Head of caudate nucleus (tissue), 42 donors: ENCODE measurements at regions of chr7 and their contacts with region 1.

Region 1: DNA sequence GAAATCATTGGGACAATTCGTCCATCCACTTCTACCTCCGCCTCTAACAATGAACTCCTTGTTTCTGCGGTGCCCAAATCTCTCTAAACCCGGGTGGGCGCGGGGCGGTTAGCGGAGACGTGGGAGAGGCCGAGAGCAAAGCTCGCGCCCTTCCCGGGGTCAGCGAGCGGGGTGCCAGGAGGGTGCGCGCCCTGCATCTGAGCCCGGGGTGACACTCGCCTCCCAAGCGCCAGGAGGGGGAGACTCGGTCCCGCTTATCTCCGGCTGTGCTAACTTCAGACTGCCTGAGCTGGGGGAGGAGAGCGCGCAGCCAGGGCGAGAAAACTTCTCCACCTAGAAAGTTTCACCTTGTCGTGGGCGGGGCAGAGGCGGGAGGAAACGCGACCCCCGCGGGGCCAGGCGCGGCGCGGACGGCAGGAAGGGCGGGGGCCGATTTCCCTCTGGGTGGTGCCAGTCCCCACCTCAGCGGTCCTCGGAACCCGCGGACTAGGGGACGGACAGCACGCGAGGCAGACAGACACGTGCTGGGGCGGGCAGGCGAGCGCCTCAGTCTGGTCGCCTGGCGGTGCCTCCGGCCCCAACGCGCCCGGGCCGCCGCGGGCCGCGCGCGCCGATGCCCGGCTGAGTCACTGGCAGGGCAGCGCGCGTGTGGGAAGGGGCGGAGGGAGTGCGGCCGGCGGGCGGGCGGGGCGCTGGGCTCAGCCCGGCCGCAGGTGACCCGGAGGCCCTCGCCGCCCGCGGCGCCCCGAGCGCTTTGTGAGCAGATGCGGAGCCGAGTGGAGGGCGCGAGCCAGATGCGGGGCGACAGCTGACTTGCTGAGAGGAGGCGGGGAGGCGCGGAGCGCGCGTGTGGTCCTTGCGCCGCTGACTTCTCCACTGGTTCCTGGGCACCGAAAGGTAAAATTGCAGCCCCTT is at the start of gene MET:
- DNase-seq: peak; percentile 54 to 91 (median 74)

Region 2: DNA sequence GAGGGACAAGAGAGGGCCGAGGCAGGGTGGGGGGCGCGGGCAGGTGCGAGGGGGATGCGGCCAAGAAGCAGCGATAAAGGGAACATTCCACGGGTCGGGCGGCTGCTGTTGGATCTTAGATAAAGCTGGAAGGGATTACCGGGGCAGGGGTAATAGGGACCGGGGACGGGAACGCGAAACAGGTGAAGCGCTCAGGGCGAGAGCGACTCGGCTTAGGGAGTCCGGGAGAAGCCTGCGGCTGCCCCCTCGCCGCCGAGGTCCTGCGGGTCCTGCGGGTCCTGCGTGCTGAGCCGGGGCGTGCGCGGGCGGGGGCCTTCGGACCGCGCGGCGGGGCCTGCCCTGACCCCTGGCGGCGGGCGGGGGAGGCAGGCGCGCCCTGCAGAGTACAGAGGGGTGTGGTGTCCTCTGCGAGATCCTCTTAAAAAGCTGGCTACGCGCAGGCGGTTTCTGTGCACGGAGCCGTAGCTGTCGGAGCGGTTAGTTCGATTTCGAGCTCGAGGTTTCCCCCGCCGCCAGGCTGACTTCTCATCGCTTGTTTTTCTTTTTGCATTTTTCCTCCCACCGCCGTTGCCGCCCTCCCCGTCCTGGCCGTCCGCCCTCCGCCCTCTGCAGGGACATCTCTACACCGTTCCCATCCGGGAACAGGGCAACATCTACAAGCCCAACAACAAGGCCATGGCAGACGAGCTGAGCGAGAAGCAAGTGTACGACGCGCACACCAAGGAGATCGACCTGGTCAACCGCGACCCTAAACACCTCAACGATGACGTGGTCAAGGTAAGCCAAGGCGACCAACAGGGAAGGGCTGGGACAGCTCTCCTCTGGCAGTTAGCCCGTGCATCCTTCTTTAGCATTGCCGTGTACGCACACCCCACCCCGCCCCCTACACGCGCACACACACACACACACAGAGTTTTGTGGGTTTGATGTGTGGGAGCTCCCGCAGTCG is 145.8 kb before region 1 on chr7:
- intact Hi-C with region 1: no loop called
- DNase-seq: peak in 41 of 42 donors; percentile 42 to 87 (median 71)

Region 3: GRCh38 chr7:116598278-116598677 is 73.7 kb before region 1 on chr7:
- intact Hi-C with region 1: loop called (anchors 5 kb)
- DNase-seq: peak in 30 of 42 donors; percentile 7 to 83 (median 46)

Region 4: DNA sequence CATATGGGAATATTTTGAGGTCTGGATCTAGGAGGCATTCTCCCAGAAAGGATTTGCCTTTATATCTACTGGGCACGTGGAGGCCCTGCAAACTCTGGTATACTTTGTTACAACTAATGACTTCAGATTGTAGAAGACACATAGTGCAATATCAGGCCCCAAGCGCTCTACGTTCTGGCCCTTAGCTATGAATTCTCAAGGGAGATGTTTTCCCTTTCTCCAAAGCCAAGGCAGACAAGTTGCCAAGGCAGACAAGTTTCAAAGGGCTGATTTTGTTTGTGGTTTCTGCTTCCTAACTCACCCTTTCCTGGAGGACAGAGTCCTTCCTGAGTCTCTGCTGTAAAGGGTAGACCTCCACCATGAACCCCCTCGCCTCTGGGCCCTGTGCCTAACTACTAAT is 1300.7 kb after region 1 on chr7:
- intact Hi-C with region 1: no loop called
- DNase-seq: no peak